ENCODE measurements at regions of chr5 and their contacts with region 1.

Region 1: GRCh38 chr5:53481887-53482716 is 1.7 kb downstream of the FST start:
- DNase-seq: peak; percentile 79
- H3K4me3 Mint-ChIP-seq: peak overlapping the region; percentile 77
- H3K27ac Mint-ChIP-seq: no peak overlapping the region
- H3K4me1 Mint-ChIP-seq: peaks cover 32% of the 10 kb centered on the region
- H3K27me3 Mint-ChIP-seq: peaks cover 30% of the 10 kb centered on the region

Region 2: GRCh38 chr5:53170748-53171349 is 311.3 kb before region 1 on chr5:
- CTCF ChIA-PET with region 1: no interaction called
- POLR2A ChIA-PET with region 1: no interaction called
- intact Hi-C with region 1: loop called (anchors 5 kb)
- DNase-seq: no peak
- H3K4me3 Mint-ChIP-seq: no peak overlapping the region
- H3K27ac Mint-ChIP-seq: no peak overlapping the region
- H3K4me1 Mint-ChIP-seq: no peaks in the 10 kb centered on the region
- H3K27me3 Mint-ChIP-seq: no peaks in the 10 kb centered on the region

Region 3: DNA sequence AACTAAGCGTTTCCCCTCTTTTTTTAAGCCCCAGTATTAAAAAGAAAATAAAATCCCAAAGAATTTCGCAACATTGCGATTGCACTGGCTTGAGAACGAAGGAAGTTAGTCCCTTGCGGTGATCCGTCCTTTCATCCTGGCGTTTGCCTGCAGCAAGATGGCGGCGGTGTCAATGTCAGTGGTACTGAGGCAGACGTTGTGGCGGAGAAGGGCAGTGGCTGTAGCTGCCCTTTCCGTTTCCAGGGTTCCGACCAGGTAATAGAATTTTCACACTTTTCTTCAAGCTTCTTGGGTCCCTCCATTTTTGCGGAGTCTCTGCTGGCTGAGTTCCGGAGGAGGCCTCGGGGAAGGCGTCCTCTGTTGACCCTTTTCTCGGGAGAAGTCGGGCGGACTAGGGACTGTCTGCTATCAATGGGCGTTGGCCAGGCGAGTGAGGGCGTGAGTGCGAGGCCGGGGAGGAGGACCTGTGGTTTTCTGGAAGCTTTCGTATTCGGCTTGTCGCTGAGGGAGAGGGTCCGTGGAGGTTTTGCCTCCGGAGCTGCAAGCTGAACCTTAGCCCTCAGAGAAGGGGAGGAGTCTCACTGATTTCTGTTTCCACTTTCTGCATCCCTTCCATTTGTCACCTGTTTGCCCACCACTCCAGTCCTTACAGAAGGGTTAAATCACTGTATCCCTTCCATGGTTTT is 78.5 kb after region 1 on chr5 and contains the start of gene NDUFS4:
- CTCF ChIA-PET with region 1: no interaction called
- POLR2A ChIA-PET with region 1: no interaction called
- intact Hi-C with region 1: loop called (anchors 1 kb)
- DNase-seq: peak; percentile 89
- H3K4me3 Mint-ChIP-seq: peak within 1 kb of the TSS; percentile 99
- H3K27ac Mint-ChIP-seq: peak within 1 kb of the TSS; percentile 90
- H3K4me1 Mint-ChIP-seq: peaks cover 29% of the 10 kb centered on the region
- H3K27me3 Mint-ChIP-seq: peaks cover 15% of the 10 kb centered on the region
- total RNA-seq, gene NDUFS4: 68.5 to 70.5 TPM

Region 4: DNA sequence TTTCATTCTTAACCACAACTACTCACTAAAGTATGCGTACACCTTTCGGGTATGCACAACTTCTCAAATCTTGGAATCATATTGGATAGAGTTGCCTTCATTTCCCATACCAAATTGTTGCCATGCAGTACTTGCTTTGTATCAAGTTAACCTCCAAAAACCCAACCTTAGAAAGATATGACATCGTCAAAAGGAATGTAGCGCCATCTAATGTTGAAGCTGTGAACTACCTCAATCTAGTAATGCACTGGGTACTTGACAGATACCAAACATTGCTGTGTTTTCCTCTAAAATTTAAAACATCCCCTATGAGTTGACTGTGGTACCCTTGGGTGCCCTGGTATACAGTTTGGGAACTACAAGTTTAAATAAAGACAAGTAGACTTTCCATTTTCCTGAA is 509.8 kb after region 1 on chr5:
- CTCF ChIA-PET with region 1: no interaction called
- POLR2A ChIA-PET with region 1: no interaction called
- intact Hi-C with region 1: loop called (anchors 2 kb)
- DNase-seq: no peak
- H3K4me3 Mint-ChIP-seq: no peak overlapping the region
- H3K27ac Mint-ChIP-seq: no peak overlapping the region
- H3K4me1 Mint-ChIP-seq: peaks cover 3% of the 10 kb centered on the region
- H3K27me3 Mint-ChIP-seq: no peaks in the 10 kb centered on the region

Region 5: GRCh38 chr5:54217826-54218503 is 735.9 kb after region 1 on chr5:
- CTCF ChIA-PET with region 1: interaction called, 3 read pairs
- POLR2A ChIA-PET with region 1: no interaction called
- intact Hi-C with region 1: loop called (anchors 1 kb)
- DNase-seq: no peak
- H3K4me3 Mint-ChIP-seq: no peak overlapping the region
- H3K27ac Mint-ChIP-seq: no peak overlapping the region
- H3K4me1 Mint-ChIP-seq: no peaks in the 10 kb centered on the region
- H3K27me3 Mint-ChIP-seq: no peaks in the 10 kb centered on the region

Region 6: GRCh38 chr5:54229041-54229780 is 747.1 kb after region 1 on chr5:
- CTCF ChIA-PET with region 1: interaction called, 14 read pairs
- POLR2A ChIA-PET with region 1: no interaction called
- intact Hi-C with region 1: loop called (anchors 1 kb)
- DNase-seq: peak; percentile 80
- H3K4me3 Mint-ChIP-seq: no peak overlapping the region
- H3K27ac Mint-ChIP-seq: no peak overlapping the region
- H3K4me1 Mint-ChIP-seq: peaks cover 2% of the 10 kb centered on the region
- H3K27me3 Mint-ChIP-seq: no peaks in the 10 kb centered on the region

Region 7: DNA sequence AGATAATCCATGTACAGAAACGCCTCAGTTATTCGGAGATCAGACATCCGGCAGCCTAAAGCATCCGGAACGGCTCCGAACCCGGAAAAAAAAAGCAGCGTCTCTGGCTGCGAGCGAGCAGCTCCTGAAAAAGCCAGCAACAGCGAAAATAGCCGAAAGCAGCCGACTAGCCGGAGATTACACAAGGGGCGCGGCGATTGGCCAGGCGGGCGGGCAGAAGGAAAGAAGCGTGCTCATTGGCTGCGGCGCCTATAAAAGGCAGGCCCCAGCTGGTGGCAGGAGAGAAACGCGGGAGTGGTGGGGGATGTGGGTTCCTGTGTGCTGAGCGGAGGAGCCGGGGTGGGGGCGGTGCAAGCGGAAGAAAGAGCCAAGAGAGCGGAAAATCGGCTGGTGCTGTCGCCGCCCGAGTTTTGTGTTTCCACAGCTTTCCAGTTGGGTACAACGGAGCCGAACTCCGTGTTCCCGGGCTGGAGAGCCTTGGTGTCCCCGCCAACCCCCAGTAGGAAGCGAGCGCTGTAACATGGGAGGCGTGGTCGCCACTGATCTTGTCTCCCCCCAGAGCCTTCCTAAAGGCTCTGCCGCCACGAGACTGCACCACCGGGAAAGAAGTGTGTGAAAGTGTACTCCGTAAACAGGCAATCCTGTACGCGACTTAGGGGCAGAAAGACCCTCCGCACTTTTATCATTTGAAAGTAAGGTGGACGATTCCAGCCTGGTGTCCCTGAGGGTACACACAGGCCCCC is 828.5 kb after region 1 on chr5 and contains the start of gene ARL15:
- CTCF ChIA-PET with region 1: interaction called, 3 read pairs
- POLR2A ChIA-PET with region 1: no interaction called
- intact Hi-C with region 1: loop called (anchors 1 kb)
- DNase-seq: peak; percentile 98
- H3K4me3 Mint-ChIP-seq: peak within 1 kb of the TSS; percentile 86
- H3K27ac Mint-ChIP-seq: peak within 1 kb of the TSS; percentile 89
- H3K4me1 Mint-ChIP-seq: peaks cover 25% of the 10 kb centered on the region
- H3K27me3 Mint-ChIP-seq: peaks cover 3% of the 10 kb centered on the region
- total RNA-seq, gene ARL15: 4.5 to 5.5 TPM